ENCODE measurements at regions of chr6 and their contacts with region 1.

Region 1: GRCh38 chr6:87237804-87238203 is 82.4 kb downstream of the ZNF292 start:
- DNase-seq: no peak
- ATAC-seq: no peak
- H3K4me3 ChIP-seq: no peak overlapping the region
- H3K27ac ChIP-seq: no peak overlapping the region
- H3K4me1 ChIP-seq: no peaks in the 10 kb centered on the region
- H3K27me3 ChIP-seq: no peaks in the 10 kb centered on the region
- CTCF ChIP-seq: peak; percentile 36 to 75 (median 61)

Region 2: GRCh38 chr6:87066449-87067333 is 171.1 kb before region 1 on chr6:
- intact Hi-C with region 1: loop called in 2 of 10 experiments (anchors 5 to 10 kb)
- DNase-seq: peak in 1 of 2 donors; percentile 40
- ATAC-seq: no peak
- H3K4me3 ChIP-seq: no peak overlapping the region
- H3K27ac ChIP-seq: no peak overlapping the region
- H3K4me1 ChIP-seq: peaks cover 0 to 3% (median 0%) of the 10 kb centered on the region in 9 donors
- H3K27me3 ChIP-seq: peaks cover 0 to 65% (median 12%) of the 10 kb centered on the region in 7 donors
- CTCF ChIP-seq: peak in 8 of 9 donors; percentile 20 to 68 (median 58)

Region 3: DNA sequence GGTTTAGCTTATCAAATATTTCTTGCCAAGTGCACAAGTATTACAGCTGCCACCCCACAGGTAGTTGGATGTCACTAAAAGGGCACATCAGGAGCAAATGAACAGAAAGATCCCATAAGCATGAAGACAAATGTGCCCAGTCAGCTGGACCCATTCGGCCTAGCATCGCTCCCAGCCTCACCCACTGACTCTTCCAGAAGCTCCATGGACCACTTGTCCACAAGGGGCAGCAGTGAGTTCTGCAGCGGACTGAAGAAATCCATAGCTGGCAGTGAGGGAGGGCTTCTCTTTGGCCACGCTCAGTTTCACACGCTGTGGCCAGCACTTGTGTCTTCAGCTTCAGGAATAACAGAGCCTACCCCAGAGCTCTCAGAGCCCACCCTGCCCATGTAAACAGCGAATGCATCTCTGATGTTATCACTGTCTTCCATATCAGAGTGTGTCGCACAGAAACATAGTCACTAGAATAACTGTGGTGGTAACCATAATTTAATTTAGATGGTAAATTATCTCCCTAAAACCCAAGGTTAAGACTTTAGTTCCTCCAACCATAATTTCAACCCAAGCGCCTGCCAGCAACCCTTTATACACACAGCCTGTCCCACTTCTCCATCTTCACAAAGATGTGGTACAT is 158.7 kb before region 1 on chr6:
- intact Hi-C with region 1: loop called in 1 of 10 experiments (anchors 10 kb)
- DNase-seq: peak; percentile 31 to 52
- ATAC-seq: peak in 5 of 8 donors; percentile 43 to 80 (median 58)
- H3K4me3 ChIP-seq: no peak overlapping the region
- H3K27ac ChIP-seq: no peak overlapping the region
- H3K4me1 ChIP-seq: no peaks in the 10 kb centered on the region
- H3K27me3 ChIP-seq: peaks cover 0 to 5% (median 0%) of the 10 kb centered on the region in 7 donors
- CTCF ChIP-seq: peak; percentile 60 to 94 (median 83)

Region 4: GRCh38 chr6:87139236-87139635 is 98.6 kb before region 1 on chr6:
- intact Hi-C with region 1: loop called in 8 of 10 experiments (anchors 2 to 10 kb)
- DNase-seq: peak in 1 of 2 donors; percentile 18
- ATAC-seq: peak in 3 of 8 donors; percentile 54 to 62 (median 57)
- H3K4me3 ChIP-seq: no peak overlapping the region
- H3K27ac ChIP-seq: no peak overlapping the region
- H3K4me1 ChIP-seq: no peaks in the 10 kb centered on the region
- H3K27me3 ChIP-seq: peaks cover 0 to 8% (median 0%) of the 10 kb centered on the region in 7 donors
- CTCF ChIP-seq: peak; percentile 49 to 81 (median 70)

Region 5: DNA sequence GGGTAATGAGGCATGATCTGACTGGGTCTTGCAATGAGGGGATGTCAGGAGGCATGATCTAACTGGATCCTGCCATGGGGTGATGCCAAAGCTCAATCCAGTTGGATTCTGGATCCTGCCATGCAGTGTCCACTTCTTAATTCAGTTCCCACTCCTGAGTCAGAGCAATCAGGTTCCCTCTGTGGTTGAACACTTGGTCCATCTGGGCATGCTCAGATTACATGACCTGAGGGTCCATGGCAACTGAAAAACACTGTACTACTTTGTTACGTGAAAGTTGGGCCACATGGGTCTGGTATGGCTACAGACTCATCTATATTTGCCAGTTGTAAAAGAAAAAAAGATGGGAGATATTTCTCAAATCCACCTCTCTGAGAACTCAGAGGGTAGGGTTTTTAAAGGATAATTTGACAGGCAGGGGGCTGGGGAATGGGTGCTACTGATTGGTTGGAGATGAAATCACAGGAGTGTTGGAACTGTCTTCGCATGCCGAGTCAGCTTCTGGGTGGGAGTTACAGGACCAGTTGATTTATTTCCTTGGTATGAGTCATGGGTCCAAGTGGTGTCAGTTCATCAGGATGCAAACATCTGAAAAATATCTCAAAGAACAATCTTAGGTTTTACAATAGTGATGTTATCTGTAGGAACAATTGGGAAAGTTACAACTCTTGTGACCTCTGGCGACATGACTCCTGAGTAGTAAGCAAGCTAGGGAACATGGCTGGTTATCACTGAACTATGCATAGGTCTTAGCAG is 128.4 kb after region 1 on chr6:
- intact Hi-C with region 1: no loop called
- DNase-seq: no peak
- ATAC-seq: no peak
- H3K4me3 ChIP-seq: no peak overlapping the region
- H3K27ac ChIP-seq: no peak overlapping the region
- H3K4me1 ChIP-seq: no peaks in the 10 kb centered on the region
- H3K27me3 ChIP-seq: no peaks in the 10 kb centered on the region
- CTCF ChIP-seq: no peak

Region 6: DNA sequence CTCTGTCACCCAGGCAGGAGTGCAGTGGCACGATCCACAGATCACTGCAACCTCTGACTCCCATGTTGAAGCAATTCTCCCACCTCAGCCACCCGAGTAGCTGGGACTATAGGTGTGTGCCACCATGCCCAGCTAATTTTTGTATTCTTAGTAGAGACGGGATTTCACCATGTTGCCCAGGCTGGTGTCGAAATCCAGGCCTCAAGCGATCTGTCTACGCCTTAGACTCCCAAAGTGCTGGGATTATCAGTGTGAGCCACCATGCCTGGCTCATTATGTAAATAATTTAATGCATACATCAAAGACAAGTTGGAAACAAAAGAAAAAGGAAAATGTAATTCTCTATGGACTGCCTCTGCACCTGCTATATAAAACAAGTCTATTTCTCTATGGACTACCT is 176.5 kb after region 1 on chr6:
- intact Hi-C with region 1: no loop called
- DNase-seq: no peak
- ATAC-seq: no peak
- H3K4me3 ChIP-seq: no peak overlapping the region
- H3K27ac ChIP-seq: no peak overlapping the region
- H3K4me1 ChIP-seq: no peaks in the 10 kb centered on the region
- H3K27me3 ChIP-seq: peaks cover 0 to 3% (median 0%) of the 10 kb centered on the region in 7 donors
- CTCF ChIP-seq: no peak